CD4-positive, alpha-beta T cell (primary cell): ENCODE measurements at regions of chr10 and their contacts with region 1.

Region 1: GRCh38 chr10:23067939-23068775 is 27.2 kb upstream of the MSRB2 start:
- DNase-seq: peak; percentile 44 to 81 (median 56)
- ATAC-seq: peak; percentile 59
- H3K4me3 ChIP-seq: no peak overlapping the region
- H3K4me3 Mint-ChIP-seq: no peak overlapping the region
- H3K27ac ChIP-seq: no peak overlapping the region
- H3K27ac Mint-ChIP-seq: no peak overlapping the region
- H3K4me1 ChIP-seq: peaks cover 3% of the 10 kb centered on the region
- H3K4me1 Mint-ChIP-seq: peaks cover 5% of the 10 kb centered on the region
- H3K27me3 ChIP-seq: no peaks in the 10 kb centered on the region
- H3K27me3 Mint-ChIP-seq: peaks cover 19% of the 10 kb centered on the region
- CTCF ChIP-seq: peak; percentile 89

Region 2: GRCh38 chr10:21989453-21990154 is 1078.6 kb before region 1 on chr10:
- CTCF ChIA-PET with region 1: no interaction called
- POLR2A ChIA-PET with region 1: no interaction called
- intact Hi-C with region 1: loop called (anchors 1 to 2 kb)
- DNase-seq: peak in 9 of 14 experiments; percentile 3 to 67 (median 19)
- ATAC-seq: peak; percentile 87
- H3K4me3 ChIP-seq: no peak overlapping the region
- H3K4me3 Mint-ChIP-seq: no peak overlapping the region
- H3K27ac ChIP-seq: no peak overlapping the region
- H3K27ac Mint-ChIP-seq: no peak overlapping the region
- H3K4me1 ChIP-seq: peaks cover 3% of the 10 kb centered on the region
- H3K4me1 Mint-ChIP-seq: peaks cover 10% of the 10 kb centered on the region
- H3K27me3 ChIP-seq: no peaks in the 10 kb centered on the region
- H3K27me3 Mint-ChIP-seq: no peaks in the 10 kb centered on the region
- CTCF ChIP-seq: peak; percentile 57

Region 3: DNA sequence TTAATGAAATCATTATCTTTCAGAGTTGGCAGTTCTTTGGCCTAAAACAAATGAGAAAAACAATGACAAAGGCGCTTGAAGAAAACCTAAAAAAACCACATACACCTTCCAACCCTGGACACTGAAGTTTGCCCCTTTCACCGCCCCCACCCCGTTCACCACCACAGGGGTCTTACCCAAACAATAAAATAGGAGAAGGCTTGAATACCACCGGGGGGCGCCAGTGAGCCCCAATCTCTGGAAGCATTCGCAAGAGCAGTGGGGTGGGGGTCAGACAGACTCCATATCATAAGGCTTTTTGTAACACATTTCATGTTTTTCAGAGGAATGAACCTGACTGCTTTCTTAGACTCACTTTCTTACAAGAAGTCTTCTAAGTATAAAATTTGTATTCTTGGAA is 517.4 kb before region 1 on chr10:
- CTCF ChIA-PET with region 1: no interaction called
- POLR2A ChIA-PET with region 1: no interaction called
- intact Hi-C with region 1: loop called in 1 of 2 experiments (anchors 2 kb)
- DNase-seq: peak; percentile 59 to 84 (median 68)
- ATAC-seq: peak; percentile 73
- H3K4me3 ChIP-seq: no peak overlapping the region
- H3K4me3 Mint-ChIP-seq: no peak overlapping the region
- H3K27ac ChIP-seq: no peak overlapping the region
- H3K27ac Mint-ChIP-seq: peak overlapping the region; percentile 2
- H3K4me1 ChIP-seq: no peaks in the 10 kb centered on the region
- H3K4me1 Mint-ChIP-seq: peaks cover 5% of the 10 kb centered on the region
- H3K27me3 ChIP-seq: no peaks in the 10 kb centered on the region
- H3K27me3 Mint-ChIP-seq: no peaks in the 10 kb centered on the region
- CTCF ChIP-seq: peak; percentile 81

Region 4: GRCh38 chr10:22573820-22574569 is 494.2 kb before region 1 on chr10:
- CTCF ChIA-PET with region 1: no interaction called
- POLR2A ChIA-PET with region 1: no interaction called
- intact Hi-C with region 1: loop called in 1 of 2 experiments (anchors 10 kb)
- DNase-seq: peak in 6 of 14 experiments; percentile 8 to 69 (median 50)
- ATAC-seq: peak; percentile 37
- H3K4me3 ChIP-seq: no peak overlapping the region
- H3K4me3 Mint-ChIP-seq: no peak overlapping the region
- H3K27ac ChIP-seq: no peak overlapping the region
- H3K27ac Mint-ChIP-seq: peak overlapping the region; percentile 75
- H3K4me1 ChIP-seq: peaks cover 14% of the 10 kb centered on the region
- H3K4me1 Mint-ChIP-seq: peaks cover 67% of the 10 kb centered on the region
- H3K27me3 ChIP-seq: no peaks in the 10 kb centered on the region
- H3K27me3 Mint-ChIP-seq: no peaks in the 10 kb centered on the region
- CTCF ChIP-seq: peak; percentile 73

Region 5: DNA sequence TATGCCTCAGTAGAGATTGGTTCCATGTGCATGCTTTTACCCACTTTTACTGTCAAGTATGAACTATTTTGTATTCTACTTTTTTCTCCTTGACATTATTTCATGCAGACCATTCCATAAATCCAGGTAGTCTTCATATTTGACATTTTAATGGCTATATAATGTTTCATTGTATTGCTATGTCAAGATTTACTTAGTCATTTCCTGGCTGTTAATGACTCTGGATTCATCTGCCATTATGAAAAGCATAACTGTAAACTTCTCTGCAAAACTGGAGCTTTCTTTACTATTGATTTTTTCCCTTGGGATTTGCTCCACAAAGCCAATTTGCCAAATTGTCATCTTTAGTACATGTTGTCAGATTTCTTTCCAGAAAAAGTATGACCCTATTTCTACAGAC is 20.5 kb after region 1 on chr10:
- CTCF ChIA-PET with region 1: no interaction called
- POLR2A ChIA-PET with region 1: no interaction called
- intact Hi-C with region 1: no loop called
- DNase-seq: no peak
- ATAC-seq: no peak
- H3K4me3 ChIP-seq: no peak overlapping the region
- H3K4me3 Mint-ChIP-seq: no peak overlapping the region
- H3K27ac ChIP-seq: no peak overlapping the region
- H3K27ac Mint-ChIP-seq: no peak overlapping the region
- H3K4me1 ChIP-seq: no peaks in the 10 kb centered on the region
- H3K4me1 Mint-ChIP-seq: no peaks in the 10 kb centered on the region
- H3K27me3 ChIP-seq: no peaks in the 10 kb centered on the region
- H3K27me3 Mint-ChIP-seq: no peaks in the 10 kb centered on the region
- CTCF ChIP-seq: no peak